BJ (cell line): ENCODE measurements at regions of chr17 and their contacts with region 1.

Region 1: GRCh38 chr17:28055546-28056275 is 13.2 kb downstream of the NLK start:
- DNase-seq: no peak
- H3K4me3 ChIP-seq: no peak overlapping the region
- H3K27me3 ChIP-seq: no peaks in the 10 kb centered on the region
- CTCF ChIP-seq: no peak

Region 2: GRCh38 chr17:28041068-28041843 is 14.5 kb before region 1 on chr17:
- CTCF ChIA-PET with region 1: interaction called, 4 read pairs
- POLR2A ChIA-PET with region 1: interaction called, 12 read pairs
- DNase-seq: peak; percentile 99
- H3K4me3 ChIP-seq: peak overlapping the region; percentile 75
- H3K27me3 ChIP-seq: no peaks in the 10 kb centered on the region
- CTCF ChIP-seq: no peak

Region 3: GRCh38 chr17:28173801-28174200 is 118.1 kb after region 1 on chr17:
- CTCF ChIA-PET with region 1: no interaction called
- POLR2A ChIA-PET with region 1: no interaction called
- DNase-seq: no peak
- H3K4me3 ChIP-seq: no peak overlapping the region
- H3K27me3 ChIP-seq: no peaks in the 10 kb centered on the region
- CTCF ChIP-seq: no peak

Region 4: GRCh38 chr17:28698253-28698941 is 642.7 kb after region 1 on chr17:
- CTCF ChIA-PET with region 1: no interaction called
- POLR2A ChIA-PET with region 1: no interaction called
- DNase-seq: no peak
- H3K4me3 ChIP-seq: no peak overlapping the region
- H3K27me3 ChIP-seq: no peaks in the 10 kb centered on the region
- CTCF ChIP-seq: no peak